ENCODE measurements at regions of chr5 and their contacts with region 1.

Region 1: DNA sequence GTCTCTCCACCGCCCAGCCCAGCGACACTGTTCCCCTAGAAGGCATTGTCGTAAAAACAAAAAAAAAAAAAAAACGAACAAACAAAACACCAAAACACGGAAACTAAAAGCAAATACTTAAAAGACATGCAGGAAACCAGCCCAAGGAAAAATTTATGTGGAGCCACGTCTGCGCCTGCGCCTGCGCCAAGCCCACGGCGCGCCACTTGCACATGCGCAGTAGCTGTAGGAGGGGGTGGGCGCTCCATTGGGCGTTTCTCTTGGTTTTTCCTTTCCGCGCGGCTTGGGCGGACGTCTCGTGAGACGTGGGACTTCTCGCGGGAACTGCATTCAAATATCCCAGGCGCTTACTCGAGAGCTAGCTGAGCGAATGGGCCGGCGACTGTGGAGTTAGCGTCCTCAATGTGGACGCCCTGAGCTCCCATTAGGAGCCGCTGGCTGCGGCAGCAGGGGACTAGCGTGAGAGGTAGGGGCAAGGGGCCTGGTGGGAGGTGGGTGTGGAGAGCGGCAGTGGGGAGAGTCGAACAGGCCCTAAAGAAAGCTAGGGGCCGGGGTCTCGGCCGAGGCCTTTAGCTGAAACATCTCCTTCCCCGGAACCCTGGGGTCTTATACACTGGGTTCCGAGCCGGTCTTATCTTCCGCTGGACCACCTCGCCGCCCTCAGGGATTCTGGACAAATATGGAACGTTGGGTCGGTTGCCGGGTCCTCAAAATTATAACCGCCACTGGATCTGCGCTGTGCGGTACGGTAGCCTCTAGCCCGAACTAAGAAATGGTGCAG is at the start of gene SPDL1:
- DNase-seq: peak; percentile 97
- ATAC-seq: peak; percentile 95
- H3K4me3 Mint-ChIP-seq: peak within 1 kb of the TSS; percentile 90
- H3K27ac Mint-ChIP-seq: peak within 1 kb of the TSS; percentile 95
- H3K4me1 Mint-ChIP-seq: peaks cover 37% of the 10 kb centered on the region
- H3K27me3 Mint-ChIP-seq: peaks cover 15% of the 10 kb centered on the region
- total RNA-seq, gene SPDL1: 45.6 to 48.6 TPM

Region 2: DNA sequence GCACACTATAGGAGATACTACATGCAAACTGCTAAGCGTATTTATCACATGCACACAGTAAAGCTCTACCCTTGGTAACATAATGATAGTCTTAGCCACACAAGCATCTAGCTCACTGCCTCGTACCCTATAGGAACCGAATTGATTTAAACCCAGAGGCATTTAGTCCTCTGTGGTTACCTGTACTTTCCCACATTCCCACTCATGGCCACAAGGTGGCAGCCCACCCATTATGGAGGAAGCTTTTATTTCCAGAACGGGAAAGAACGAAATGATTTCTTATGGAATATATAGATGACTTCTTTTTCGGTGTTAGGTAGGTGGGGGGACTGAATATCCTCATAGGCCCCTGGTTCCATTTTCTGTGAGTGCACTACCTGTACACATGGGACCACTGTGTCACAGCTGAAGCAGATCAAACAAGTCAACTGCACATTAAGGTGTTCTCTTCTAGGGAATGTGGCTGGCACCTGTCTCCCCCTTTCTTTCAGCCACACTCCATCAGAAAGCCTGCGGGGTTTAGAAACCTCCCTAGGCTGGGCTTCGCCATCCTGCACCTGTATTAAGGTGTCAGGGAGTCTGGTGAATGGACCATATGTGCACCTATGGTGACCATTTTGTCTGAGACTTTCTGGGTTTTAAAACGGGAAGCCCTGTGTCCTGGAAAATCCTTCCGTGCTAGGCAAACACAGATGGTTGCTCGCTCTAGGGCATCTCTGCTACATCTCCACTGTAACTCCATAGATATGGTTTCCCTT is 595.9 kb before region 1 on chr5:
- CTCF ChIA-PET with region 1: interaction called, 11 read pairs
- DNase-seq: peak; percentile 64
- ATAC-seq: no peak
- H3K4me3 Mint-ChIP-seq: no peak overlapping the region
- H3K27ac Mint-ChIP-seq: no peak overlapping the region
- H3K4me1 Mint-ChIP-seq: no peaks in the 10 kb centered on the region
- H3K27me3 Mint-ChIP-seq: peaks cover 12% of the 10 kb centered on the region

Region 3: GRCh38 chr5:169602535-169602934 is 18.9 kb after region 1 on chr5:
- CTCF ChIA-PET with region 1: no interaction called
- DNase-seq: no peak
- ATAC-seq: no peak
- H3K4me3 Mint-ChIP-seq: no peak overlapping the region
- H3K27ac Mint-ChIP-seq: no peak overlapping the region
- H3K4me1 Mint-ChIP-seq: no peaks in the 10 kb centered on the region
- H3K27me3 Mint-ChIP-seq: peaks cover 4% of the 10 kb centered on the region

Region 4: GRCh38 chr5:169637085-169637548 is 53.5 kb after region 1 on chr5 and contains the start of gene DOCK2:
- CTCF ChIA-PET with region 1: interaction called, 10 read pairs
- DNase-seq: peak; percentile 88
- ATAC-seq: peak; percentile 85
- H3K4me3 Mint-ChIP-seq: peak within 1 kb of the TSS; percentile 87
- H3K27ac Mint-ChIP-seq: peak within 1 kb of the TSS; percentile 94
- H3K4me1 Mint-ChIP-seq: peaks cover 53% of the 10 kb centered on the region
- H3K27me3 Mint-ChIP-seq: peaks cover 6% of the 10 kb centered on the region
- total RNA-seq, gene DOCK2: 271 to 321 TPM

Region 5: DNA sequence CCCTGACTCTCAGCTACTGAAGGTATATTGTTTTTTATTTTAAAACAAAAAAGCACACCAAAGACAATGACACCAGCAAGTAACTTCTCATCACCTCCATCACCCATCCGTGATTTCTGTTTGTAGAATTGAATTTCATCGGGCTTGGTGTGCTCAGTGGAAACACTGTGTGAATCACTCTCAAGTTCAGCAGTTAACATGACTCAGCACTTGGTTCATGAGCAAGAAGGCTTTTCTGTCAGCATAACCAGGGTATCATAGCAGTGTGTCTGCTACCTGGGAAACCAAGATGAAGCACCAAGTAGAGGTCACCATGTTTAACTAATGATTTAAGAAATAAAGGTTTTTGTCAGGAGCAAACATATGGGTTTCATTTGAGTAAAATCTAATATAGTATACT is 273.0 kb after region 1 on chr5:
- CTCF ChIA-PET with region 1: no interaction called
- DNase-seq: no peak
- ATAC-seq: no peak
- H3K4me3 Mint-ChIP-seq: no peak overlapping the region
- H3K27ac Mint-ChIP-seq: no peak overlapping the region
- H3K4me1 Mint-ChIP-seq: peaks cover 19% of the 10 kb centered on the region
- H3K27me3 Mint-ChIP-seq: no peaks in the 10 kb centered on the region